ENCODE measurements at regions of chr4 and their contacts with region 1.

Region 1: DNA sequence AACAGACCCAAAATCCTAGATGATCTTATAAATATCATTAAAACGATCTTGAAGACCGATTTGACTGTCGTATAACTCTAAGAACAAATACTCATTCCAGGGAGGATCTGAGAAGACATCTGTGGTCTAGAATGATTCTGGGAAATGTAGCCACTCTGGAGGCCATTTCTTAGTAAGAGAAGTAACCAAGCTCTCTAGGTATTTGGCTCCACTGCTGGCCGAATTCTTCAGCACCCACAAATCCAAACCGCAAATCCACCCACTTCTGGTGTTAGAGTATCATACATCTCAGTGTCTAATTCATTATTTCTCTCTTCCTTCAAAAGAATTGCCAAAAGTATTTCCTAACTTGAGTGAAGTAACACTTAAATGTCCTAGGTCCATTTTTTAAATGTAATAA is 23.9 kb downstream of the KLHL5 start:
- DNase-seq: no peak
- H3K4me3 ChIP-seq: no peak overlapping the region
- H3K27ac ChIP-seq: no peak overlapping the region
- H3K4me1 ChIP-seq: no peaks in the 10 kb centered on the region
- CTCF ChIP-seq: no peak

Region 2: GRCh38 chr4:38641811-38642210 is 444.1 kb before region 1 on chr4:
- CTCF ChIA-PET with region 1: no interaction called
- POLR2A ChIA-PET with region 1: no interaction called
- intact Hi-C with region 1: no loop called
- DNase-seq: no peak
- H3K4me3 ChIP-seq: no peak overlapping the region
- H3K27ac ChIP-seq: no peak overlapping the region
- H3K4me1 ChIP-seq: no peaks in the 10 kb centered on the region
- CTCF ChIP-seq: no peak

Region 3: DNA sequence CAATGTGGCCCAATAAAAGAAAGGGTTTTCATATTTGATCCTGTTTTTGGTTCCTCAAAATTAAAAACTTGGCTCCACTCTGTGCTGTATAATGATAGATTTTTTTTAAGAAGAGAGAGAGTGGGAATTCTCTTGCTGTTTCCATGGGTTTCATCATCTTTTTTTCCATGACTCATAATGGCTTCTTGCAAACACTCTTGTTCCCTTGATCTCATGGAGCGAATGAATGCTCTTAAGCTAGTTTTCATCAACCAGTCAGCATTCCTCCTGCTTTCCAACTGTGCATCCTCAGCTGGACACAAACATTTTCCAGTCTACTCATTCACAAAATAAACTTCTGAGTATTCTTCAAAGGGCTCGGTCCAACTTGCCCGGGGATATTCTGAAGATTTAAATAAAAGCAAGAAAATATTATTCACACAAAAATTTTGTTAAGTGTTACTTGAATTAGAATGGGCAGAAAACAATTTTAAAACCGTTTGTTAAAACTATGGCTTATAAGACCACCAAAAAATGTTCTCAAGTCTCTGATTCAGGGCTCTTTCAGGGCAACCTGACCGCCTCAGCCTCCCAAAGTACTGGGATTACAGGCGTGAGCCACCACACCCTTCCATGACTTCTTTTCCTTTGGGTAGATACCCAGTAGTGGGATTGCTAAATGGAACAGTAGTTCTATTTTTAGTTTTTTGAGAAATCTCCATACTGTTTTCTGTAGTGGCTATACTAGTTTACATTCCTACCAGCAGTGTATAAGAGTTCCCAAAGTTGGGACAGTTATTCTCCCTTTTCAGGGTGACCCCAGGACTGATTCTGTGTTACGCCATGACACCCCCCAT is 118.4 kb before region 1 on chr4:
- CTCF ChIA-PET with region 1: no interaction called
- POLR2A ChIA-PET with region 1: no interaction called
- intact Hi-C with region 1: no loop called
- DNase-seq: no peak
- H3K4me3 ChIP-seq: no peak overlapping the region
- H3K27ac ChIP-seq: no peak overlapping the region
- H3K4me1 ChIP-seq: no peaks in the 10 kb centered on the region
- CTCF ChIP-seq: no peak

Region 4: GRCh38 chr4:39067451-39067850 is 18.4 kb before region 1 on chr4:
- CTCF ChIA-PET with region 1: no interaction called
- POLR2A ChIA-PET with region 1: interaction called, 11 read pairs
- intact Hi-C with region 1: no loop called
- DNase-seq: no peak
- H3K4me3 ChIP-seq: no peak overlapping the region
- H3K27ac ChIP-seq: no peak overlapping the region
- H3K4me1 ChIP-seq: no peaks in the 10 kb centered on the region
- CTCF ChIP-seq: no peak